ENCODE measurements at regions of chr4 and their contacts with region 1.

Region 1: DNA sequence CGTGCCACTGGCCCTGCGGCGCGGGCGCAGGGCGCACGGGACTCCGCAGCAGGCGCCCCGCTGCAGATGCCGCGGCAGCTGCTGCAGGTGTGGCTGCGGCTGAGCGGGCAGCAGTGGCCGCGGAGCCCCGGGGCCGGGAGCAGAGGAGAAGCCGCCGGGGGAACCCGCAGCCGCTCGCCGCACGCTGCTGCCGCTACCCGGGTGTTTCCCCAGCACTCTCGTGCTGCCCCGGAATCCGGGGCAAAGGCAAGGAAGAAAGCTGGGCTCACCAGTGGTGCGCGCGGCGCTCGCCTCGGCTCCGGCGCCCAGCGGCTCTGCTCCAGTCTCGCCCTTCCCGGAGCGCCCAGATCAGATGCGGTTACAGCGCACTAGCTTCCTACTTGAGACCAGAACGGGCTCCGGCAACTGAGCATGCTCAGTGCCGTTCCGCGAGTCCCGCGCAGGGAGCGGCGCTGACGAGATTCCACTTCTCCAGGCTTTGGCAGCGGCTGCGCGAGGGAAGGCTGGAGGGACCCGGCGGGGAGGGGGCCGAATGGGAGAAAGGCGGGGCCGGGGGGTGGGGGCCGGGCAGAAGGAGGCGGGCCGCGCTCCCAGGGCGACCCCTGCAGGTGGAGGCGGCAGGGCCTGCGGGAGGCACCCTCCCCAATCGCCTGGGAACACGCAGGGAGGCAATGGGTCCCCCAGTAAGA is at the start of gene APBB2:
- DNase-seq: peak; percentile 95
- total RNA-seq, gene APBB2: 35.2 TPM

Region 2: GRCh38 chr4:40840985-40841571 is 373.2 kb before region 1 on chr4:
- intact Hi-C with region 1: loop called (anchors 2 kb)
- DNase-seq: peak; percentile 90

Region 3: DNA sequence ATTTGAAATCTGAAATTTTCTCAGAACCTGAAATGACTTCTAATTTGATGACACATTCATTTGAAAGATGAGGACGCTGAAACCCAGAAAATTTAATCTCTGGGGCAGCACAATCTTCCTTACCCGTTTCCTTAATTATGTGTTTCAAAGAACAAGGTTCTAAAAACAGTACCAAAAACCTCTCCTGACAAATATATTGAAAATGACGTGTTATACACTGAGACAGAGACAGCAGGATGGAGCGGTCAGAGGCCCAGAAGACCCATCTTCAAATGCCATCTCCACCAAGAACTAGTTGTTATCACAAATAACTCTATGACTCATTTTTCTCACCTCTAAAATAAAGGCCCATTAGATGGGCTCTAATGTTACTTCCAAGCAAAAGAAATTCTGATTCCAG is 287.2 kb before region 1 on chr4:
- intact Hi-C with region 1: loop called (anchors 2 kb)
- DNase-seq: no peak

Region 4: GRCh38 chr4:40976343-40976742 is 237.9 kb before region 1 on chr4:
- intact Hi-C with region 1: loop called (anchors 2 kb)
- DNase-seq: no peak

Region 5: GRCh38 chr4:41050866-41051775 is 163.2 kb before region 1 on chr4:
- intact Hi-C with region 1: loop called (anchors 2 kb)
- DNase-seq: peak; percentile 80

Region 6: DNA sequence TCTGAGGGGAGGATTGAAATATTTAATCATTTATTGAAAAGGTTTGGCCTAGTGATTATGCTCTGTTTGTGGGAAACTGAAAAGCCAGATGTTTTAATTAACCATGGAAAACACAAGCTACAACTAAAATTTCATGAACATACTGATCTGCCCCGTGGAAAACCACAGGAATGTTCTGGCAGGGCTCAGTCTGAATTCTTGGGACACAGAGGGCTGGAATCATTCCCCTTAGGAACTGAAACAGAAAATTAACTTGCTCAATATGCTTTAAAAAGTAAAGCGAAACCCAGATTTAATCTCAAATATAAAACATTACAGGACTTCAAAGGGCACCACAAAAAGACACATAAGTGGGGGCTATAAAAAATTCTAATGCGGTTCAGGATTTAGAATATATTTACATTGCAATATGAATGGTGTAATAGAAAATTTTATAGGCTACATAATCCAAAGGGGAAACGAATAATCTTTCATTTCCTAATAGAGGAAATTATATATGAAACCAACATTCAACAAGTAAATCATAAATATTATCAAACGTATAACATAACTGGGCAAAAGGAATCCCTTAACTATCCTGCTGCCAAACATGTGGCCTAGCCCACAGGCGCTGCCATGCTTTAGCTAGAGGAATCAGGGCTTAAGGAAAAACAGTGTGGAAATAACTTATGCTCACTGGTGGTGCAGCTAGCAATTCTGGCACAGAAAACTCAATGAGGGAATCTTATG is 70.8 kb before region 1 on chr4:
- intact Hi-C with region 1: loop called (anchors 5 kb)
- DNase-seq: no peak